CD4-positive, alpha-beta memory T cell (primary cell): ENCODE measurements at regions of chr1 and their contacts with region 1.

Region 1: GRCh38 chr1:65067491-65068201 is 80.4 kb upstream of the AK4 start:
- DNase-seq: peak; percentile 66 to 72 (median 69)
- H3K4me3 ChIP-seq: peak overlapping the region; percentile 84 to 97
- H3K4me3 Mint-ChIP-seq: peak overlapping the region; percentile 92 to 98 (median 96)
- H3K27ac ChIP-seq: peak overlapping the region; percentile 87
- H3K27ac Mint-ChIP-seq: peak overlapping the region; percentile 95 to 99 (median 98)
- H3K4me1 ChIP-seq: peaks cover 50% of the 10 kb centered on the region
- H3K4me1 Mint-ChIP-seq: peaks cover 39 to 66% (median 49%) of the 10 kb centered on the region in 4 donors
- H3K27me3 ChIP-seq: no peaks in the 10 kb centered on the region
- H3K27me3 Mint-ChIP-seq: no peaks in the 10 kb centered on the region

Region 2: GRCh38 chr1:64744492-64745180 is 323.0 kb before region 1 on chr1 and contains the start of gene RAVER2:
- CTCF ChIA-PET with region 1: no interaction called
- POLR2A ChIA-PET with region 1: no interaction called
- intact Hi-C with region 1: loop called (anchors 2 kb)
- DNase-seq: peak; percentile 53 to 75 (median 62)
- H3K4me3 ChIP-seq: peak within 1 kb of the TSS; percentile 17 to 54
- H3K4me3 Mint-ChIP-seq: peak within 1 kb of the TSS; percentile 87 to 94 (median 92)
- H3K27ac ChIP-seq: peak within 1 kb of the TSS; percentile 43
- H3K27ac Mint-ChIP-seq: peak within 1 kb of the TSS; percentile 77 to 90 (median 82)
- H3K4me1 ChIP-seq: peaks cover 13% of the 10 kb centered on the region
- H3K4me1 Mint-ChIP-seq: peaks cover 9 to 30% (median 22%) of the 10 kb centered on the region in 4 donors
- H3K27me3 ChIP-seq: peaks cover 3% of the 10 kb centered on the region
- H3K27me3 Mint-ChIP-seq: peaks cover 2 to 3% of the 10 kb centered on the region in 2 donors
- total RNA-seq, gene RAVER2: 1.7 to 2.1 TPM

Region 3: GRCh38 chr1:64823691-64824476 is 243.8 kb before region 1 on chr1:
- CTCF ChIA-PET with region 1: no interaction called
- POLR2A ChIA-PET with region 1: interaction called, 4 read pairs
- intact Hi-C with region 1: loop called (anchors 5 kb)
- DNase-seq: peak; percentile 59 to 68 (median 63)
- H3K4me3 ChIP-seq: no peak overlapping the region
- H3K4me3 Mint-ChIP-seq: peak overlapping the region in 5 of 8 donors; percentile 44 to 66 (median 54)
- H3K27ac ChIP-seq: no peak overlapping the region
- H3K27ac Mint-ChIP-seq: peak overlapping the region in 5 of 7 donors; percentile 13 to 82 (median 52)
- H3K4me1 ChIP-seq: peaks cover 22% of the 10 kb centered on the region
- H3K4me1 Mint-ChIP-seq: peaks cover 21 to 35% (median 30%) of the 10 kb centered on the region in 4 donors
- H3K27me3 ChIP-seq: no peaks in the 10 kb centered on the region
- H3K27me3 Mint-ChIP-seq: no peaks in the 10 kb centered on the region

Region 4: DNA sequence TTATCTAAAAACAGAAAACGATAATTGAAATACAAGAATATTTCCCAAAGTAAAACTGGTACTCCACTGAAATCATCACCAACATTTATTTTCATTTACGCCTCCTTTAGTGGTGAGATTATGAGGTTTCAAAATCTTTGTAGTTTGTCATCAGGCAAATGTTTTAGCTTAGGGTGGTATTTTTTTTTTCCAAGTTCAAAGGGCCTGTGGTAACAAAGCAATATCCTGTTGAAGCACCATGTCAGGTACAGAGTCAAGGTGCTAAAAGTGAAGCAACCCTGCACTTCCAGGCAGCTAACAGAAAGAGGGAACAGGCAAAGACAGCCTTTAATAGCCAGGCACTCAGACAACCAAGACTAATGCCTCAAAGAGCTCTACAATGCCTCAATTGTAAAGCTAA is 190.5 kb before region 1 on chr1:
- CTCF ChIA-PET with region 1: interaction called, 4 read pairs
- POLR2A ChIA-PET with region 1: interaction called, 19 read pairs
- intact Hi-C with region 1: loop called (anchors 2 kb)
- DNase-seq: peak; percentile 76 to 90 (median 87)
- H3K4me3 ChIP-seq: no peak overlapping the region
- H3K4me3 Mint-ChIP-seq: peak overlapping the region; percentile 65 to 87 (median 82)
- H3K27ac ChIP-seq: peak overlapping the region; percentile 31
- H3K27ac Mint-ChIP-seq: peak overlapping the region; percentile 86 to 96 (median 94)
- H3K4me1 ChIP-seq: peaks cover 59% of the 10 kb centered on the region
- H3K4me1 Mint-ChIP-seq: peaks cover 60 to 89% (median 74%) of the 10 kb centered on the region in 4 donors
- H3K27me3 ChIP-seq: no peaks in the 10 kb centered on the region
- H3K27me3 Mint-ChIP-seq: no peaks in the 10 kb centered on the region

Region 5: DNA sequence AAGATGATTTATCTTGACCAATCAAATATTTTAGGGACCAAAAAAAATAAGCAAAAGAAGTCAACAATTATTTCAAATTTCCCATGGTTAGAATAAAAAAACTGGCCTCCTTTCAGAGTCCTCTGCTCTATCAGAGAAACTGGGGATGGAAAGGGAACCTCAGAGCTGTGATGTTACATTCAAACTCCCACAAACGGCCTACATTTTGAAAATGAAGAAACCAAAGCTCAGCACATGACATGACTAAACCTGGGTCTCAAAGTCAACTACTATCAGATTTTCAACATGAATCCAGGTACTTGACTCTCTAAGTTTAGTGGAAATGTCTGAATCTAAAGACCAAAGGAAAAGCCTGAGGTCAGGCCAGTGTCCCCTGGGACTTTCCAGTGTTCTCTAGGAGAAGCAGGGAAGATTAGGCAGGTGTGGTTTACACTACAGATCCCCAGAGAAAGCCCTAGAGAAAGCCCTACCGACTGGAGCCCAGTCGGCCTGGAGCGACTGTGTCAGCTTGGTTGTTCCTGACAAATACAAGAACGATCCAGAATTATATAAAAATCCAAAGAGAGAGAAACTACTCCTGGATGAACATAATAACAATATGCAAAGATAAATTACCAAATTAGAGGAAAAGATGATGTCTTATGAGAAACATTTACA is 126.1 kb before region 1 on chr1:
- CTCF ChIA-PET with region 1: no interaction called
- POLR2A ChIA-PET with region 1: no interaction called
- intact Hi-C with region 1: no loop called
- DNase-seq: no peak
- H3K4me3 ChIP-seq: no peak overlapping the region
- H3K4me3 Mint-ChIP-seq: peak overlapping the region in 4 of 8 donors; percentile 27 to 47 (median 36)
- H3K27ac ChIP-seq: no peak overlapping the region
- H3K27ac Mint-ChIP-seq: peak overlapping the region in 4 of 7 donors; percentile 33 to 63 (median 48)
- H3K4me1 ChIP-seq: peaks cover 73% of the 10 kb centered on the region
- H3K4me1 Mint-ChIP-seq: peaks cover 49 to 85% (median 71%) of the 10 kb centered on the region in 4 donors
- H3K27me3 ChIP-seq: no peaks in the 10 kb centered on the region
- H3K27me3 Mint-ChIP-seq: no peaks in the 10 kb centered on the region

Region 6: DNA sequence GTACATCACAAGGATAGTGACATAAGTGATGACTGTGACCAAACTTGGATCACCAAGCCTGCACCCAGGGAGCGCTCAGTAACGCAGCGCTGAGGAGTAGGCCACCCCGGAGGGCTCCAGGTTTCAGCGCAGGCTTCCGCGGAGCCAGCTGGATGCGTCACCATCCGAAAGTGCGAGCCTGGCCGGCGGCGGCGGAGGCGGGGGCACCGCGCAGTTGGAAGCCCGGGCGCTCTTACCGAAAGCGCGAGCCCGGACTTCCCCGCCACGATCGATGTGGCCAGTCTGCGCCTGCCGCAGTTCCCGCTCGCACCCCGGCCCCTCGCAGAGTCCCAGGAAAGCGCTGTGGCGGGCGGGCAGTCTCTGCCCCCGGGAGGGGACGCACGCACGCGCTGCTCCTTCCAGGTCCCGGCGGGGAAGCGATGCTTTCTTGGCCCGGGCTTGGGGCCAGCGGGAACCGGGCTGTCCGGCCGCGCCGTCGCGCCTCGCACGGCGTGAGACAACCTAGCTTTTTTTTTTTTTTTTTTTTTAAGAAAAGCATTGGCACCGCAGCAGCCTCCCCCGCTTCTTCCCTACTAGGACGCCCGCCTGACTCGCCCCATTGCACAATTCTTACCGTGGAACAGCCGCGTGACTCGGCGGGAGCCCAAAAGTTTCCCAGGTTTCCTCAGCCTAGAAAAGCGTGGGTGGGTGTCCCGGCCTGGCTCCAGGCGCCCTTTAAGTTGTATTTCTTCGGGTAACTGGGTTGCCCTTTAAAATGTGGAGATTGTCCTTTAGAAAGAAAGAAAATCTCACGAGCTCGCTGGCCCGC is 64.9 kb before region 1 on chr1:
- CTCF ChIA-PET with region 1: interaction called, 3 read pairs
- POLR2A ChIA-PET with region 1: interaction called, 16 read pairs
- intact Hi-C with region 1: loop called (anchors 2 kb)
- DNase-seq: peak; percentile 67 to 87 (median 72)
- H3K4me3 ChIP-seq: peak overlapping the region; percentile 33 to 49
- H3K4me3 Mint-ChIP-seq: peak overlapping the region; percentile 77 to 90 (median 89)
- H3K27ac ChIP-seq: peak overlapping the region; percentile 52
- H3K27ac Mint-ChIP-seq: peak overlapping the region; percentile 57 to 96 (median 89)
- H3K4me1 ChIP-seq: peaks cover 25% of the 10 kb centered on the region
- H3K4me1 Mint-ChIP-seq: peaks cover 21 to 43% (median 30%) of the 10 kb centered on the region in 4 donors
- H3K27me3 ChIP-seq: no peaks in the 10 kb centered on the region
- H3K27me3 Mint-ChIP-seq: no peaks in the 10 kb centered on the region

Region 7: GRCh38 chr1:65048335-65048734 is 19.3 kb before region 1 on chr1:
- CTCF ChIA-PET with region 1: interaction called, 8 read pairs
- POLR2A ChIA-PET with region 1: interaction called, 42 read pairs
- intact Hi-C with region 1: loop called (anchors 2 kb)
- DNase-seq: no peak
- H3K4me3 ChIP-seq: no peak overlapping the region
- H3K4me3 Mint-ChIP-seq: peak overlapping the region in 2 of 8 donors; percentile 17 to 30
- H3K27ac ChIP-seq: no peak overlapping the region
- H3K27ac Mint-ChIP-seq: peak overlapping the region in 1 of 7 donors; percentile 53
- H3K4me1 ChIP-seq: peaks cover 32% of the 10 kb centered on the region
- H3K4me1 Mint-ChIP-seq: peaks cover 43 to 72% (median 54%) of the 10 kb centered on the region in 4 donors
- H3K27me3 ChIP-seq: no peaks in the 10 kb centered on the region
- H3K27me3 Mint-ChIP-seq: no peaks in the 10 kb centered on the region

Region 8: DNA sequence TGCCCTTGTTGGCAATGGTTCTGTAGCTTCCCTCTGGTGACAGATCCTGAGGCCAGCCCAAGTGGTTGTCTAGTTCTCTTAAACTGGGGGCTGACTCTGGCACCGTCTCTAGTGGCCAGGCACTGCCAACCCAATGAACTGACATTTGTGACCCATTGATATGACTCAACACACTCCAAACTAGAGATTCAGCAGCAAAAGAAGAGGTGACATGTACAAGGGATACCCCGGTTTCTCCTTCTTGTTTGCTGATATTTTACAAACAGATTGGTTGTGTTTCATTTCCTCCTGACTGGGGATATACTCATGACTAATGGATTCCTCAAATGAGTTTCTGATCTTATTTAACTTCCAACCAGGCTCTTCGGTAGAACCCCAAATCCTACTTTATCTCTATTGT is 175.8 kb after region 1 on chr1:
- CTCF ChIA-PET with region 1: no interaction called
- POLR2A ChIA-PET with region 1: no interaction called
- intact Hi-C with region 1: no loop called
- DNase-seq: no peak
- H3K4me3 ChIP-seq: no peak overlapping the region
- H3K4me3 Mint-ChIP-seq: no peak overlapping the region
- H3K27ac ChIP-seq: no peak overlapping the region
- H3K27ac Mint-ChIP-seq: no peak overlapping the region
- H3K4me1 ChIP-seq: no peaks in the 10 kb centered on the region
- H3K4me1 Mint-ChIP-seq: no peaks in the 10 kb centered on the region
- H3K27me3 ChIP-seq: no peaks in the 10 kb centered on the region
- H3K27me3 Mint-ChIP-seq: peaks cover 15 to 18% of the 10 kb centered on the region in 2 donors

Region 9: GRCh38 chr1:65254319-65255034 is 186.8 kb after region 1 on chr1:
- CTCF ChIA-PET with region 1: no interaction called
- POLR2A ChIA-PET with region 1: interaction called, 4 read pairs
- intact Hi-C with region 1: loop called (anchors 5 kb)
- DNase-seq: peak; percentile 81 to 85 (median 83)
- H3K4me3 ChIP-seq: peak overlapping the region; percentile 45 to 68
- H3K4me3 Mint-ChIP-seq: peak overlapping the region; percentile 85 to 98 (median 94)
- H3K27ac ChIP-seq: no peak overlapping the region
- H3K27ac Mint-ChIP-seq: peak overlapping the region in 5 of 7 donors; percentile 72 to 94 (median 88)
- H3K4me1 ChIP-seq: peaks cover 20% of the 10 kb centered on the region
- H3K4me1 Mint-ChIP-seq: peaks cover 8 to 20% (median 16%) of the 10 kb centered on the region in 4 donors
- H3K27me3 ChIP-seq: no peaks in the 10 kb centered on the region
- H3K27me3 Mint-ChIP-seq: peaks cover 0 to 4% of the 10 kb centered on the region in 2 donors

Region 10: GRCh38 chr1:65265651-65266351 is 198.2 kb after region 1 on chr1:
- CTCF ChIA-PET with region 1: no interaction called
- POLR2A ChIA-PET with region 1: no interaction called
- intact Hi-C with region 1: no loop called
- DNase-seq: peak; percentile 32 to 56 (median 45)
- H3K4me3 ChIP-seq: peak overlapping the region in 1 of 2 donors; percentile 46
- H3K4me3 Mint-ChIP-seq: peak overlapping the region; percentile 68 to 80 (median 74)
- H3K27ac ChIP-seq: no peak overlapping the region
- H3K27ac Mint-ChIP-seq: peak overlapping the region in 2 of 7 donors; percentile 23 to 48
- H3K4me1 ChIP-seq: peaks cover 15% of the 10 kb centered on the region
- H3K4me1 Mint-ChIP-seq: peaks cover 8 to 15% (median 12%) of the 10 kb centered on the region in 4 donors
- H3K27me3 ChIP-seq: peaks cover 4% of the 10 kb centered on the region
- H3K27me3 Mint-ChIP-seq: peaks cover 13 to 15% of the 10 kb centered on the region in 2 donors